ENCODE measurements at regions of chr6 and their contacts with region 1.

Region 1: DNA sequence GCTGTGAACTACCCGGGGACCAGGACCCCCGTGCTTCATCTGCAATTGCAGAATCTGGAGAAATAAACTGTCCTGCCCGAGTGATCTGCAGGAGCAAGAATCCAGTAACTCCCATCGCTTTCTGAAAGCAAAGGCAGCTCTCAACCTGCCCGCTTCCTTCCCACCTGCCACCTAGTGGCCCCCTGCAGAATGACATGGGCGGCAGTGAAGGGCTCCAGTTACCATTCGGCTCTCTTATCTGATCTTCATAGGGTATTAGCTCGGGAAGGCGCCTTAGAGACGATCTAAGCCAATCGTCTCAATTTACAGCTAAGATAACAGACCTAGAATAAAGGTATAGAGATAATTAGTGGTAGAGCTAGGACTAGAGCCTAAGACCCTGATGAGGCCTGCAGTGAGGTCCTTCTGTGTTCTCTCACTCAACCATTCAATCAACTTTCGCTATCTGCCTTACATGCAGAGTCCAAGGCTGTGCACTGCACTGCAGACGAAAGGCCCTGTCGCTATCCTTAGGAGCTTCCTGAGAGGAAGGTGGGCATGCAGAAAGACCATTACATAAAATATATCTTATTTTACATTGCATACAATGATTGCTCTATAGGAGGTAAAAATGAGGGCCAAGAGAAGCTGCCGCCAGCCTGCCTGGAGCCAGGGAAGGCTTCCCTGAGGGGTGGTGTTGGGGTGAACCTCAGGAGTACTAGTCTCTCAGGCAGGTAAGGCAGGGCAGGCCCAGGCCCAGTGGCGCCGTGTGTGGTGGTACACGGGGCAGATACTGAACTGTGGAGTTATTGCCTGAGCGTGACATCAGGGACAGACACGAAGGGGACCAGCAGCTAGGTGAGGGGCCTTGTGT is 7.1 kb upstream of the PSMG4 start:
- DNase-seq: peak; percentile 80
- ATAC-seq: peak; percentile 82
- H3K4me3 ChIP-seq: no peak overlapping the region
- H3K27ac ChIP-seq: no peak overlapping the region
- H3K4me1 ChIP-seq: peaks cover 13% of the 10 kb centered on the region
- H3K27me3 ChIP-seq: peaks cover 1% of the 10 kb centered on the region; the same call in 1 of the 2 replicates
- CTCF ChIP-seq: peak; percentile 97
- POLR2A ChIP-seq: no peak
- RAD21 ChIP-seq: peak; percentile 93

Region 2: DNA sequence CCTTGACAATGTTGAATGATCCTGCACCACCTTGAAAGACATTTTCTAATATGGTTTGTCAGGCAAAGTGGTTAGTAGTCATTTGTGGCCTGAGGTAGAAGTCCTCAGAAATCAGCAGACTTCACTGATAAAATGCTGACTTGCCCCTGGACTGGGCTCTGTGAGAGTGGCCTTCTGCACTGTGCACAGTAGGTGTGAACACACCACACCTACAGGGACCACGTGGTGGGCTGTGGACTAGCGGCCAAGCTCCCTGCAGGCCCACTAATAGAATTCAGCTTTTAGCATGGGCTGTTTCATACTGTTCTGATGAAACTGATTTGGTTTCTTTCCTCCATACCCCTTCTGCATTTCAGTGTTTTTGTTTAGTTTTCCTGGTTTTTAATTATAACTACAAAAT is 125.9 kb before region 1 on chr6:
- CTCF ChIA-PET with region 1: interaction called, 5 read pairs
- POLR2A ChIA-PET with region 1: interaction called, 4 read pairs
- dilution Hi-C with region 1: no loop called
- in situ Hi-C with region 1: loop called (anchors 5 kb)
- intact Hi-C with region 1: loop called (anchors 1 kb)
- DNase-seq: no peak
- ATAC-seq: no peak
- H3K4me3 ChIP-seq: no peak overlapping the region
- H3K27ac ChIP-seq: no peak overlapping the region
- H3K4me1 ChIP-seq: no peaks in the 10 kb centered on the region
- H3K27me3 ChIP-seq: no peaks in the 10 kb centered on the region
- CTCF ChIP-seq: no peak
- POLR2A ChIP-seq: no peak
- RAD21 ChIP-seq: no peak

Region 3: DNA sequence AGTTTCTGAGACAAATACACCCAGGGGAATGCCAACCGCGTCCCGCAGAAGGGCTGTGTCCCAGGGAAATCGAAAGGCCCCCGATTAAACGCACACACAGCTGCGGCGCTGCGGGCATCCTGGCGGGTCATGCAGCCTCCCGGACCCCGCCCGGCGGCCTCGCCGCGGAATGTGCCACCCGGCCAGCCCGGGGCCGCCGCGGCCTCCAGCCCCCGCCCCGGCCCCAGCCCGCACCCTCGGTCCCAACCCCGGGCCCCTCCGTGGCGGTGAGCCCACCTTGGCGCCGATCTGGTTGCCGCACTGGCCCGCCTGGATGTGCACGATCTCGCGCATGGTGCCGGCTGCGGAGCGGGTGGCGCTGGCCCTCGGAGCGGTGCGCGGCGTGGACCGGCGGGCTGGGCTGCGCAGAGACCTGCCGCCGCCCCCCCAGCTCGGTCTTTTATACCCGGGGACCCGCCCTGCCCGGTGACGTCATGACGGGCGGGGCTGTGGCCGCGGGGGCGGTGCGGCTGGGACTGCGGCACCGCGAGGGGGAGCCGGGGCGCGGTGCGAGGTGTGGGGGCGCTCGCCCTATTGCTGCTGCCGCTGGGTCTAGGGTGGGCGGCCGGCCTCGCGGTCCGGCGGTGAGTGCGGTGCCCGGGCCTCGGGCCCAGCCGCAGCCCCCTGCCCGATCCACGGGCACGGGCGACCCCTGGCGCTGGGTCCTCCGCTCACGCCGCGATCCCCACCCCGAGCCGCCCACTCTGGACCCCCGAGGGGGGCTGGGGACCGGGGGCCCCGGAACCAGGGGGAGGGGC is 94.4 kb before region 1 on chr6 and contains the start of gene TUBB2A:
- CTCF ChIA-PET with region 1: interaction called, 11 read pairs
- POLR2A ChIA-PET with region 1: interaction called, 5 read pairs
- dilution Hi-C with region 1: no loop called
- in situ Hi-C with region 1: no loop called
- intact Hi-C with region 1: loop called (anchors 1 kb)
- DNase-seq: peak; percentile 78
- ATAC-seq: peak; percentile 90
- H3K4me3 ChIP-seq: peak within 1 kb of the TSS; percentile 99
- H3K27ac ChIP-seq: peak within 1 kb of the TSS; percentile 60
- H3K4me1 ChIP-seq: peaks cover 2% of the 10 kb centered on the region; the same call in 1 of the 2 replicates
- H3K27me3 ChIP-seq: no peaks in the 10 kb centered on the region
- CTCF ChIP-seq: peak; percentile 85
- POLR2A ChIP-seq: peak; percentile 99
- RAD21 ChIP-seq: peak; percentile 62
- total RNA-seq, gene TUBB2A: 164 and 182 TPM in 2 replicates

Region 4: DNA sequence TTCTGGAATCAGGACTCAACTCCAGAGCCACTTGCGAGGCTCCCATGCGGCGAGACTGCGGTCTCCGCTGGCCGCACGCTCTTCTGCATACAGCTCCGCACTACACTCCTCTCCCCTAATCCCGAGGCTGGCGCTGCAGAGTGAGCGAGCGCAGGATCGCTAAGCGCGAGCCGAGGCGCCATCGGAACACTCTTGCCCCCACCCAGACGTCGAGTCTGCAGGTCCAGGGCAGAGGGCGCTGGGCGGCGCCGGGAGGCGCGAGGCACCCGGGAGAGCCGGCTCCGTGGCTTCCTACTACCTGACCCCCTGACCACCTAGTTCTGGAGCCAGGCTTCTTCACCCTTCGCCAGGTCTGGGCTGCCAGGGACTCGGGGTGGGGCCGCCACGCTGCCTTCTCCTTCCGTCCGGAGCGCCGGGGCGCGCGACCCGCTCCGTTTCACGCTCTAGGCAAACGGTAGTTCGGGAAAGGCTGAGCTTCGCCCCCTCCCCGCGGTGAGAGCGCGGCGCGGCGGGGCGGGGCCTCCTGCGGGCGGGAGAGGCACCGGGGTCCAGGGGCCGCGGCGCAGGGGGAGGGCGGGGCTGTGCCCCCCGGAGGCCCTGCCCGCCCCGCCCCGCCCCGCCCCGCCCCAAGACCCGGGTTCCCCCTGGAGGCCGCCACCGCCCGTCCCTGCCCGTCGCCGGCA is 89.0 kb before region 1 on chr6:
- CTCF ChIA-PET with region 1: interaction called, 11 read pairs
- POLR2A ChIA-PET with region 1: interaction called, 5 read pairs
- dilution Hi-C with region 1: no loop called
- in situ Hi-C with region 1: no loop called
- intact Hi-C with region 1: loop called (anchors 1 kb)
- DNase-seq: peak; percentile 71
- ATAC-seq: peak; percentile 85
- H3K4me3 ChIP-seq: peak overlapping the region; percentile 89
- H3K27ac ChIP-seq: peak overlapping the region; percentile 86
- H3K4me1 ChIP-seq: peaks cover 2% of the 10 kb centered on the region
- H3K27me3 ChIP-seq: no peaks in the 10 kb centered on the region
- CTCF ChIP-seq: 0 out of 2 replicates have a peak, but pooled peaks have one; percentile 15
- POLR2A ChIP-seq: peak; percentile 23; the same call in 1 of the 2 replicates
- RAD21 ChIP-seq: peak; percentile 19; the same call in 1 of the 2 replicates

Region 5: DNA sequence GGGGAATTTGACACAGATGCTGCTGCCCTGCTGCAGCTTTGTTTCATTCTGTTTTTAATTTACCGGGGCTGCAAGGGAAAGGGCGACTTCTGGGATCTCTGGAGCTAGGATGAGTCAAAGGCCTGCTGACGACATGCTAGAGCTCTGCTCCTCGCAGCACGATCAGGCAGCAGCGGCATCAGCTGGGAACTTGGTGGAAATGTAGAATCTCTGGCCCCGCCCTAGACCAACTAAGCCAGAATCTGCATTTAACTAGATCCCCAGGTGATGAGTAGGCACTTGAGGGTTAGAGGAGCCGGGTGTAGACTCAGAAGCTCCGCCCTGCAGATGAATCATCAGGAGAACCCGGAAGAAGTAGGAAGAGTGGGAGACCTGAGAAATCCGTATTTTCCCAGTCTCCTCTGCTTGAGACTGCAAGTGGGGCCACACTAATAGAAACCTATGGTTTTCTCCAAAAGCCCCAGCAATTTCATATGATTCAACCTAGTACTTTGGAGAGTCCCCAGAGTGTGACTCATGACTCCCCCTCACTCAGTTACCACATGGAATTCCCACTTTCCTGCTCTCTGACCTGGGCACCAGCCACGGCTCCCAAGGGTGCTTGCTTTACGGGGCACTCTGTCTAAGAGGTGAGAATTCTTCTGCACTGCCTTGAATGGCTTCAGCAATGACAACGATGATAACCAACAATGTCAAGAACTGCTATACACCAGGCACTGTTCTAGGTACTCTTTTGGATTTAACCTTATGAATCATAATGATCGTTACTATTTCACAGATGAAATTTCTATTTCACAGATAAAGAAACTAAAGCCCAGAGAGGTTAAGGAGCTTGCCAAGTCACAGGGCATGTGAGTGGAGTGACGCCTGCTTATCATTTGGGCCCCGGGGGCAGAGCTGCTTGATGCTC is 42.3 kb before region 1 on chr6:
- CTCF ChIA-PET with region 1: interaction called, 4 read pairs
- POLR2A ChIA-PET with region 1: no interaction called
- dilution Hi-C with region 1: no loop called
- in situ Hi-C with region 1: no loop called
- intact Hi-C with region 1: loop called (anchors 1 kb)
- DNase-seq: peak; percentile 98
- ATAC-seq: peak; percentile 82
- H3K4me3 ChIP-seq: no peak overlapping the region
- H3K27ac ChIP-seq: peak overlapping the region; percentile 33; the same call in 1 of the 2 replicates
- H3K4me1 ChIP-seq: peaks cover 18% of the 10 kb centered on the region
- H3K27me3 ChIP-seq: no peaks in the 10 kb centered on the region
- CTCF ChIP-seq: peak; percentile 54
- POLR2A ChIP-seq: peak; percentile 66
- RAD21 ChIP-seq: peak; percentile 68

Region 6: GRCh38 chr6:3231247-3232016 is 20.3 kb before region 1 on chr6:
- CTCF ChIA-PET with region 1: interaction called, 3 read pairs
- POLR2A ChIA-PET with region 1: interaction called, 4 read pairs
- dilution Hi-C with region 1: no loop called
- in situ Hi-C with region 1: no loop called
- intact Hi-C with region 1: loop called (anchors 1 kb)
- DNase-seq: peak; percentile 74
- ATAC-seq: peak; percentile 85
- H3K4me3 ChIP-seq: peak overlapping the region; percentile 74
- H3K27ac ChIP-seq: peak overlapping the region; percentile 76
- H3K4me1 ChIP-seq: peaks cover 3% of the 10 kb centered on the region; the same call in 1 of the 2 replicates
- H3K27me3 ChIP-seq: peaks cover 43% of the 10 kb centered on the region
- CTCF ChIP-seq: no peak
- POLR2A ChIP-seq: no peak
- RAD21 ChIP-seq: no peak

Measured in IMR-90 (cell line).